PC-9 (cell line): ENCODE measurements at regions of chr1 and their contacts with region 1.

Region 1: GRCh38 chr1:215526553-215527151 is 40.5 kb upstream of the KCTD3 start:
- DNase-seq: no peak
- H3K4me3 ChIP-seq: no peak overlapping the region
- H3K27ac ChIP-seq: no peak overlapping the region
- H3K4me1 ChIP-seq: no peaks in the 10 kb centered on the region
- H3K27me3 ChIP-seq: no peaks in the 10 kb centered on the region
- CTCF ChIP-seq: peak; percentile 90

Region 2: DNA sequence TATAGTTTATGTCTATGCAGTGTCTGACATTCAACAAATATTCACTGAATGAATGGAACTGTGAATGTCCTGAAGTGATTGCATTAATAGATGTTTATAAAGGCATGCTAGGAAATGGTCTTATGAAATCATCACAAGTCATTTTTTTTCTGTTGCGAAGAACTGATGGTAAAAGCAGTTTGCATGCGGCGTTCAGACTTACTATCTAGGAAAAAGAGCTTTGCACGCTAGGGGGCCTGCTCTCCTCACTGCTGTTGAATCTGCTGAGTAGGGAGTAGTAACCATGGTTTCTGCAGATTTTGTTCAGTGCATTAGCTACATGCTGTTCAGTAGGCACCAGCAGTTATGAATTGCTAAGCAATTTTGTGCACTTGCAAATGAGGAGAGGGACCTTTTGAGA is 865.8 kb before region 1 on chr1:
- CTCF ChIA-PET with region 1: no interaction called
- POLR2A ChIA-PET with region 1: no interaction called
- intact Hi-C with region 1: loop called (anchors 2 kb)
- DNase-seq: no peak
- H3K4me3 ChIP-seq: no peak overlapping the region
- H3K27ac ChIP-seq: no peak overlapping the region
- H3K4me1 ChIP-seq: no peaks in the 10 kb centered on the region
- H3K27me3 ChIP-seq: no peaks in the 10 kb centered on the region
- CTCF ChIP-seq: peak; percentile 26; the same call in 1 of the 2 replicates

Region 3: GRCh38 chr1:214808845-214809460 is 717.7 kb before region 1 on chr1:
- CTCF ChIA-PET with region 1: no interaction called
- POLR2A ChIA-PET with region 1: no interaction called
- intact Hi-C with region 1: loop called (anchors 10 kb)
- DNase-seq: no peak
- H3K4me3 ChIP-seq: no peak overlapping the region
- H3K27ac ChIP-seq: no peak overlapping the region
- H3K4me1 ChIP-seq: no peaks in the 10 kb centered on the region
- H3K27me3 ChIP-seq: no peaks in the 10 kb centered on the region
- CTCF ChIP-seq: peak; percentile 55